Activated B cell treated with CpG ODN at 0.5 μM for 24 hours (primary cell): ENCODE measurements at regions of chr11 and their contacts with region 1.

Region 1: GRCh38 chr11:70397983-70398833 is at the start of gene CTTN:
- DNase-seq: peak; percentile 62
- ATAC-seq: peak; percentile 72
- H3K4me3 Mint-ChIP-seq: peak within 1 kb of the TSS; percentile 77
- H3K27ac Mint-ChIP-seq: no peak within 1 kb of the TSS
- H3K4me1 Mint-ChIP-seq: peaks cover 27% of the 10 kb centered on the region
- H3K27me3 Mint-ChIP-seq: peaks cover 32% of the 10 kb centered on the region
- CTCF ChIP-seq: no peak
- total RNA-seq, gene CTTN: 1.1 TPM in 2 replicates

Region 2: DNA sequence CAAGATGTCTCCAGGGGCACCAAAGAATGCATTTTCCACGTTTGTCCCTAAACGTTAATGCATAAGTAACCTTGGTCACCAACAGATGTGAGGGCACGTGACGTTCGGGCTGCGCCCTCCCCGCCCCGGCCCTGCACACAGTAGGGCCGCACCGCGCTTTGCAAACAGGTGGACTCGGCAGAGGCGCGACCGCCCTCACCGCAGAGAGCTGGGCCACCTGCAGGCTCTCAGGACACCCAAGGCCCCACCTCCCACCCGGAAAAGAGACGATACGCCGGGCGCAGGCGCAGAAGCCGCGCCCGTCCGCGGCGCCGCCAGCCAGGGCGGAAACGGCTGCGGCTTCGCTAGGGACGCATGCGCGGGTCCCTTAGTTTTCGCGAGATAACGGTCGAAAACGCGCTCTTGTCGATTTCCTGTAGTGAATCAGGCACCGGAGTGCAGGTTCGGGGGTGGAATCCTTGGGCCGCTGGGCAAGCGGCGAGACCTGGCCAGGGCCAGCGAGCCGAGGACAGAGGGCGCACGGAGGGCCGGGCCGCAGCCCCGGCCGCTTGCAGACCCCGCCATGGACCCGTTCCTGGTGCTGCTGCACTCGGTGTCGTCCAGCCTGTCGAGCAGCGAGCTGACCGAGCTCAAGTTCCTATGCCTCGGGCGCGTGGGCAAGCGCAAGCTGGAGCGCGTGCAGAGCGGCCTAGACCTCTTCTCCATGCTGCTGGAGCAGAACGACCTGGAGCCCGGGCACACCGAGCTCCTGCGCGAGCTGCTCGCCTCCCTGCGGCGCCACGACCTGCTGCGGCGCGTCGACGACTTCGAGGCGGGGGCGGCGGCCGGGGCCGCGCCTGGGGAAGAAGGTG is 195.1 kb before region 1 on chr11 and contains the start of gene FADD:
- CTCF ChIA-PET with region 1: no interaction called
- POLR2A ChIA-PET with region 1: no interaction called
- intact Hi-C with region 1: loop called (anchors 5 kb)
- DNase-seq: peak; percentile 83
- ATAC-seq: peak; percentile 66
- H3K4me3 Mint-ChIP-seq: peak within 1 kb of the TSS; percentile 93
- H3K27ac Mint-ChIP-seq: peak within 1 kb of the TSS; percentile 92
- H3K4me1 Mint-ChIP-seq: peaks cover 28% of the 10 kb centered on the region
- H3K27me3 Mint-ChIP-seq: no peaks in the 10 kb centered on the region
- CTCF ChIP-seq: no peak
- total RNA-seq, gene FADD: 29.5 and 31.2 TPM in 2 replicates

Region 3: DNA sequence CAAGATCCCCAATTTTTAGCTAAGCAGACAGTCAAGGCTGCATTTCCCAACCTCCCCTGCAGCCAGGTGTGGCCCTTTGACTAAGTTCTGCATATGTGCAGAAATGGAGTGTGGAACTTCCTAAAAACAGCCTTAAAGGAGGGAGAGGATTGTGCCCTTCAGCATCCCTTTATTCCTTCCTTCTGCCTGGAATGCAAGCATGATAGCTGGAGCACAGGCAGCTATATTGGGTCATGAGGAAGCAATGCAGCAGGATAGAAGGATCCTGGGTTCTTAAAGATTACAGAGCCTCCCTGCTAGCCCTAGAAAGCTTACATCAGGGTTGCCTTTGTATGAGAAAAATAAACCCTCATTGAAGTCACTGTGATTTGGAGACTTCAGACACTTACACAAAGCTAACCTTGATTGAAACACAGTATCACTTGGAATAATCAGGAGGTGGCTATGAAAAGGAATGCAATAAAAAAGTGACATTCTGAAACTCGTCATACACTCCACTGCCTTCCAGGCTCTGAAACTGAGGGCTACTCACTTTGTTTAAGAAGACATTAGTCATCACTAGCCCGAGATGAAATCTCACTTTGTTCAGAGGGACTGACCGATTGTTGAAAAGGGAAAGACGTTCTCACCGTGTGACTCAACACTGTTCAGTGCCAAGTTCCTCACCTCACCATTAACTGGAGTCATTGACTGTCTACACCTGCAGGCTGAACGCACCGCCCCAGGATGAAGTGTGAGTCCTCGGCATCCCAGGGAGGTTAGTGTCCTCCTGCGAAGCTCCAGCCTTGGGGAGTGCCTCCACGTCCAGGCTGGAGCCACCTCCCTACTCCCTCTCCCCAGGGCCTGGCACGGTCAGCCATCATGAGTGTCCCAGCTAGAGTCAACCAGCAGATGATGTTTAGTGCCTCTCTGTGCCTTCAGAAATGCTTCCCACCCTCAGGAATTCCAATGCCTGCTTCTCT is 164.9 kb before region 1 on chr11:
- CTCF ChIA-PET with region 1: no interaction called
- POLR2A ChIA-PET with region 1: no interaction called
- intact Hi-C with region 1: no loop called
- DNase-seq: no peak
- ATAC-seq: no peak
- H3K4me3 Mint-ChIP-seq: no peak overlapping the region
- H3K27ac Mint-ChIP-seq: no peak overlapping the region
- H3K4me1 Mint-ChIP-seq: no peaks in the 10 kb centered on the region
- H3K27me3 Mint-ChIP-seq: peaks cover 6% of the 10 kb centered on the region
- CTCF ChIP-seq: no peak

Region 4: DNA sequence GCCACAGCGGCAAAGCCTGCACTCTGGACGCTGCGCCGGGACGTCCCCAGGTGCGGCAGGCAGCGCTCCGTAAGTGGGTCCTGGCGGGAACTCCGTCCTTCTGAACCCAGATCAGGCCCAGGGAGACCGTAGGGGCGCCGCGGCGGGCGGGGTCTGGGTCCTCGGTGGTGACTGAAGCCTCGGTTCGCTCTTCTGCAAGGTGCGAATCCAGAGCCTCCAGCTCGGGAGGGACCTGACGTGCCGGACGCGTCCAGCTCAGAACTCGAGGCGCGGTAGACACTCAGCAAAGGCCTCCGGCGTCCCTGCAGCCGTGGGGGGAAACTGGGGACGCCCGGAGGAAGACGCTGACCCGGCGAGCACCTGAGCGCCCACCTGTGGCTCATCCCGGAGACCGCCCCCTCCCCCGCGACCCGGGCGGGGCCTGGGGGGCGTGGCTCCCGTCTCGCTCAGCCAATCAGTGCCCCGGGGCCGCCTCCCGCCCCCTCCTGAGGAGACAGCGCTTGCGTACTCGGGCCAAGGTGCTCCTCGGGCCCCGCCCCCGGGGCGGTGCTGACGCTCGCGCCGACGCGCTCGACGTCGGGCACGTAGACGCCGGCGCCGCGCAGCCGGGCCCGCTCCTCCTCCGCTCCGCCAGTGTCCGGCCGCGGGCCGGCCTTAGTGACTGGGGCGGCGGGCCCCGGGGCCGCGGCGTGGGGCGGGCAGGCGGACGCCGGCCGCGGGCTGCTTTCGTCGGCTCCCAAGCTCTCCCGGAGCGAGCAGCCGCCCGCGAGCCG is 127.9 kb before region 1 on chr11 and contains the start of gene PPFIA1:
- CTCF ChIA-PET with region 1: no interaction called
- POLR2A ChIA-PET with region 1: no interaction called
- intact Hi-C with region 1: loop called (anchors 1 kb)
- DNase-seq: peak; percentile 98
- ATAC-seq: peak; percentile 94
- H3K4me3 Mint-ChIP-seq: peak within 1 kb of the TSS; percentile 86
- H3K27ac Mint-ChIP-seq: no peak within 1 kb of the TSS
- H3K4me1 Mint-ChIP-seq: peaks cover 33% of the 10 kb centered on the region
- H3K27me3 Mint-ChIP-seq: peaks cover 9% of the 10 kb centered on the region
- CTCF ChIP-seq: no peak
- total RNA-seq, gene PPFIA1: 52.3 and 53.3 TPM in 2 replicates

Region 5: GRCh38 chr11:70326365-70326811 is 71.8 kb before region 1 on chr11:
- CTCF ChIA-PET with region 1: no interaction called
- POLR2A ChIA-PET with region 1: no interaction called
- intact Hi-C with region 1: no loop called
- DNase-seq: no peak
- ATAC-seq: no peak
- H3K4me3 Mint-ChIP-seq: no peak overlapping the region
- H3K27ac Mint-ChIP-seq: no peak overlapping the region
- H3K4me1 Mint-ChIP-seq: peaks cover 6% of the 10 kb centered on the region
- H3K27me3 Mint-ChIP-seq: no peaks in the 10 kb centered on the region
- CTCF ChIP-seq: no peak

Region 6: GRCh38 chr11:70433953-70434812 is 36.0 kb after region 1 on chr11:
- CTCF ChIA-PET with region 1: no interaction called
- POLR2A ChIA-PET with region 1: no interaction called
- intact Hi-C with region 1: loop called (anchors 2 kb)
- DNase-seq: peak; percentile 30
- ATAC-seq: peak; percentile 48
- H3K4me3 Mint-ChIP-seq: no peak overlapping the region
- H3K27ac Mint-ChIP-seq: no peak overlapping the region
- H3K4me1 Mint-ChIP-seq: peaks cover 40% of the 10 kb centered on the region
- H3K27me3 Mint-ChIP-seq: peaks cover 50% of the 10 kb centered on the region
- CTCF ChIP-seq: no peak